ENCODE measurements at regions of chr16 and their contacts with region 1.

Region 1: GRCh38 chr16:68332411-68333121 is 21.7 kb downstream of the PRMT7 start:
- DNase-seq: no peak
- ATAC-seq: peak; percentile 61

Region 2: GRCh38 chr16:68264128-68265077 is 68.2 kb before region 1 on chr16 and contains the start of gene SLC7A6:
- intact Hi-C with region 1: loop called (anchors 5 kb)
- DNase-seq: peak; percentile 84
- ATAC-seq: peak; percentile 62
- total RNA-seq, gene SLC7A6: 75.5 TPM

Region 3: DNA sequence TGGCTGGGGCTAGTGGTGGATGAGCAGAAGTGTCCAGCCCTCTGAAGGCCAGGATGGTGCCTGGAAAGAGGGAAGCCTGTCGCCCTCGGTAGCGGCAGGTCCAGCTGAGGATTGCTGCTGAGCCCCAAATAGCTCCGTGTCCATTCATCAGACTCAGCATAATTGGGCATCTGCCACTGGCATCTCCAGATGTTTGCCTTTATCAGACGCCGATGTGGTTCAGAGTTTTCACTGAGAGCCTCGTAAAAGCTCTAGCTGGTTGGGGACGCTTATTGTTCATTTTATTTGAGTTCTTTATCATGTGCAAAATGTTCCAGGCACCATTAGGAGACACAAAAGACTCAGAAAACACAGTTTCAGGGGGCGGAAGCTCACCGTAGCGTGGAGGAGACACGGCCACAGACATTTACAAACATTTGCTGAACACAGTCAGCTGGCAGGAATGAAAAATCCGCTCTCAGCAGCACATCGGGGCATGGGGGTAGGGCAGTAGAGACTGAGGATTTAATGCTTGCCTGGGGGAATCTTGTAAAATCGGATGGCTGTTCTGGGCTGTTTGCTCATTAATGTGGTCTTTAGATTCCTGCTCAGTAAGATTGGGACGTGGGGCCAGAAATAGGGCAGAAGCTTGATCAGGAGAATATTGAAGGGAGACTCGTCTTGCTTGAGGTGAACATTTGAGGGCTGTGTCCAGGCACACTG is 74.0 kb after region 1 on chr16:
- intact Hi-C with region 1: no loop called
- DNase-seq: no peak
- ATAC-seq: no peak

Measured in sciatic nerve (tissue), 2 donors.